ENCODE measurements at regions of chr15 and their contacts with region 1.

Region 1: GRCh38 chr15:79702621-79703020 is 194.2 kb downstream of the MTHFS start:
- DNase-seq: no peak
- ATAC-seq: no peak
- H3K4me3 ChIP-seq: no peak overlapping the region
- H3K27ac ChIP-seq: no peak overlapping the region
- H3K4me1 ChIP-seq: no peaks in the 10 kb centered on the region
- H3K27me3 ChIP-seq: no peaks in the 10 kb centered on the region
- CTCF ChIP-seq: no peak
- EP300 ChIP-seq: no peak
- POLR2A ChIP-seq: no peak
- RAD21 ChIP-seq: no peak

Region 2: DNA sequence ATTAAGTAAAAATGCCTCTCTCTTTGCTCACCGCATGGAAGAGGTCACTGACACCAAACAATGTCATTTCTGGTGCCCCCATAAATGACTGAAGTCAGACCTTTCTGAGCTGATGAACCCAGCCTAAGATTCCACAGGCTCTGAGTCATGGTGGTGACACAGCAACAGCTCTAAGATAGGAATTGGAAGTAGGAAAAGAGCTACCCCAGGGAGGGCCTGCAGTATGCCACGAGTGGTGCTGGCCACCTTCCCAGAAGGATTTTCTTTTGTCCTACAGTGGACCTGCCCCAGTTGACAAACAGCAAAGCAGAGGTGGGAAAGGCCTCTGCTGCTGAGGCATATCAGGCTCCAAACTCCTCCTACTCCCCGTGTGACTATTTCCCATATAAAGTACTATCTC is 62.4 kb before region 1 on chr15:
- CTCF ChIA-PET with region 1: no interaction called
- POLR2A ChIA-PET with region 1: no interaction called
- RAD21 ChIA-PET with region 1: no interaction called
- SMC1A ChIA-PET with region 1: no interaction called
- in situ Hi-C with region 1: no loop called
- intact Hi-C with region 1: loop called (anchors 10 kb)
- DNase-seq: no peak
- ATAC-seq: no peak
- H3K4me3 ChIP-seq: no peak overlapping the region
- H3K27ac ChIP-seq: no peak overlapping the region
- H3K4me1 ChIP-seq: no peaks in the 10 kb centered on the region
- H3K27me3 ChIP-seq: no peaks in the 10 kb centered on the region; a peak in 1 of 4 replicates
- CTCF ChIP-seq: no peak
- EP300 ChIP-seq: no peak
- POLR2A ChIP-seq: no peak
- RAD21 ChIP-seq: no peak

Measured in GM12878 (cell line).